ENCODE measurements at regions of chr5 and their contacts with region 1.

Region 1: DNA sequence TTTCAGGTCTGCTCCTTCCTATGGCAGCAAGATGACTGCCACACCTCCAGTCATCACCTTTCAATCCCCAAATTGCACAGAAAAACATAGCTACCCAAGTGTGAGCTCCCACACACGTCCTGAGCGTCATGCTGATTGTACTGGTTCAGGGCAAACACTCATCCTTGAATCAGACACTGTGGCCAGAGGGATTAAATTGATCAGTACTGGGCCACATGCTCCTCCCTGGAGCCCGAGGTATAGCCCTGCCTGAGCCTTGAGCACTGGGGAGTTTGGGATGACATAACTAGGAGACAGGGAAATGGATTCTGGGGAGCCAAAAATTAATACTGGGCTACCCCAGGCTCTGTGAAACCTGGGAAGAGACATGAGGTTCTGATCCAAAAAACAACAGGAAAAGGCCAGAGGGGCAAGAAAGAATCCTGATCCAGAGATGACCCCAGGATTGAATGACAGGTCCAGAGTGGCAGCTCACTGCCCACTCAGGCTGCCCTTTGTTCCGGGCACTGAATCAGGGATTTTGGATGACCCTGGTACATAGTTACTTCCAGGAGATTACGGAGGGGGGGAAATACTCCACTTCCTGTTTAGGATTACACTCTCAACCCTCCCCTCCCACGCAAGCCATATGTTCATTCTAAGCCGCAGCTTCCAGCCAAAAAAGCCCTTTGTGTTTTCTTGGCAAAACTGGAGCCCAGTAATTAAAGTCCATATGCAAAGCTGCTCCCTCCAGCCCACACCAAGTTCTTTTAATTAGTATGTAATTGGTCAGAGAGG is 141.6 kb upstream of the SPRY4 start:
- DNase-seq: no peak
- ATAC-seq: no peak

Region 2: GRCh38 chr5:142014911-142015584 is 451.3 kb before region 1 on chr5:
- intact Hi-C with region 1: no loop called
- DNase-seq: no peak
- ATAC-seq: no peak

Region 3: GRCh38 chr5:142542906-142543305 is 76.5 kb after region 1 on chr5:
- intact Hi-C with region 1: loop called in 1 of 2 experiments (anchors 5 kb)
- DNase-seq: no peak
- ATAC-seq: no peak

Measured in left colon (tissue), 2 donors.